ENCODE measurements at regions of chr1 and their contacts with region 1.

Region 1: GRCh38 chr1:27111626-27112573 is 43.0 kb downstream of the SLC9A1 start:
- DNase-seq: peak; percentile 97
- H3K27ac ChIP-seq: peak overlapping the region; percentile 93
- CTCF ChIP-seq: no peak; the same call in 1 of the 2 replicates

Region 2: DNA sequence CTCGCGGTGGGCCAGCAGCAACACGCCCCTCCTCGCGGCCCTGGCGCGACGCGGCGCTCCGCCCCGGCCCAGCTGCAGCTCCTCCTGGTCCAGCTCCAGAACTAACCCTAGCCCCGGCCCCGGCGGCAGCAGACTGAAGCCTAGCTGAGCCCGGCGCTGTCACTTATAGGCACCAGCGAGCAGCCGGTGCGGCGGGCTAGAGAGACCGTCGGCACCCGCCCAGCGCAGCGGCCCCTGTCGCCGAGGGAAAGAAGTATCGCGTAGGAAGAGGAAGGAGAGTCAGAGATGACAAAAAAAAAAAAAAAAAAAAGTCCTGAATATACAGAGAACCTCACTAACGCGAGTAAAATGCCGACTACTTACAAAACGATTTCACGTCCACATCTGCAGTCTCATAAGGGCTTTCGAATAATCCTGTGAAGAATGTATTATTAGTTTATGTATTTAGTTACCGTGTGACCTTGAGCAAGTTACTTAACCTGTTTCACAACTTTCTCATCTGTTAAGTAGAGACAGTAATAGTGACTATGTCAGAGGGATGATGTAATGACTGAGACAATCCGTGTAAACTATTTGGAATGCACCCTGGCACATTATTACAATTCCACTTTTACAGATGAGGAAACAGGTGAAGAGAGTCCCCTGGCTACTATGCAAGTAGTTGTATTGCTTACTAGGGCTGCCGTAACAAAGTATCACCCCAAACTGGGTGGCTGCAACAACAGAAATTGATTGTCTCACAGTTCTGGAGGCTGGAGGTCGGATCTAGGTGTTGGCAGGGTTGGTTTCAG is 43.3 kb after region 1 on chr1 and contains the start of gene SLC9A1:
- CTCF ChIA-PET with region 1: interaction called, 3 read pairs
- POLR2A ChIA-PET with region 1: interaction called, 13 read pairs
- DNase-seq: peak; percentile 88
- H3K27ac ChIP-seq: peak within 1 kb of the TSS; percentile 92
- CTCF ChIP-seq: peak; percentile 94